HepG2 (cell line): ENCODE measurements at regions of chr14 and their contacts with region 1.

Region 1: GRCh38 chr14:23665375-23666192 is 29.4 kb downstream of the DHRS2 start:
- DNase-seq: peak; percentile 85
- ATAC-seq: peak; percentile 87
- H3K4me3 ChIP-seq: no peak overlapping the region
- H3K27ac ChIP-seq: no peak overlapping the region
- H3K4me1 ChIP-seq: peaks cover 17% of the 10 kb centered on the region
- H3K27me3 ChIP-seq: peaks cover 2 to 11% of the 10 kb centered on the region in 2 experiments; a peak in 3 of 5 replicates
- CTCF ChIP-seq: peak; percentile 92
- EP300 ChIP-seq: no peak
- POLR2A ChIP-seq: no peak
- RAD21 ChIP-seq: peak; percentile 89

Region 2: DNA sequence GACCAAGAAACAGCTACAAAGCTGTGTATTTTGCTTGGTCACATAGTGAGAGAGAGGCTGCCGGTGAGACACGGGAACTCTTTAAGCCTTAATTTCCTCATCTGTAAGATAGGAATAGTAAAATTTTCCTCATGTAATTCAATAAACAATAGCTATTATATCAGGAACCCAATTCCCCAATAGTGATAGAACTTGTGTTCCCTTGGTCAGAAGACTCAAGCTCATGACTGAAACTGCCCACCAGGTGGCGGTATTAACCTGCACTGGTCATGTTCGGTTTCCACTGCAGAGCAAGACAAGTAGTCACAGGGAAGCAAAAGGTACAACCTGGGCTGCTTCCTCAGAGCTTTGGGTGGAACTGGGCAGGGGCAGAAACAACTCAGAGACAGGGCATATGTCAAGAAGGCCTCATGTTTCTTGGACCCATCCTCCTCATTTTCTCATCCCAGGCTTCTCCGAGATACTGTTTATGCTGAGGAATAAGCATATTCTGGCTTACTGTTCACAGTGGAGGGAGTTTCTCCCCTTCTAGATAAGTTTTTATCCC is 679.0 kb before region 1 on chr14:
- CTCF ChIA-PET with region 1: no interaction called
- POLR2A ChIA-PET with region 1: no interaction called
- in situ Hi-C with region 1: no loop called
- intact Hi-C with region 1: no loop called
- DNase-seq: peak; percentile 93
- ATAC-seq: peak; percentile 56
- H3K4me3 ChIP-seq: no peak overlapping the region
- H3K27ac ChIP-seq: no peak overlapping the region
- H3K4me1 ChIP-seq: peaks cover 37% of the 10 kb centered on the region
- H3K27me3 ChIP-seq: no peaks in the 10 kb centered on the region; a peak in 1 of 5 replicates
- CTCF ChIP-seq: no peak
- EP300 ChIP-seq: 0 out of 4 replicates have a peak, but pooled peaks of 1 of the 2 experiments have one; percentile 14
- POLR2A ChIP-seq: no peak
- RAD21 ChIP-seq: peak; percentile 96

Region 3: DNA sequence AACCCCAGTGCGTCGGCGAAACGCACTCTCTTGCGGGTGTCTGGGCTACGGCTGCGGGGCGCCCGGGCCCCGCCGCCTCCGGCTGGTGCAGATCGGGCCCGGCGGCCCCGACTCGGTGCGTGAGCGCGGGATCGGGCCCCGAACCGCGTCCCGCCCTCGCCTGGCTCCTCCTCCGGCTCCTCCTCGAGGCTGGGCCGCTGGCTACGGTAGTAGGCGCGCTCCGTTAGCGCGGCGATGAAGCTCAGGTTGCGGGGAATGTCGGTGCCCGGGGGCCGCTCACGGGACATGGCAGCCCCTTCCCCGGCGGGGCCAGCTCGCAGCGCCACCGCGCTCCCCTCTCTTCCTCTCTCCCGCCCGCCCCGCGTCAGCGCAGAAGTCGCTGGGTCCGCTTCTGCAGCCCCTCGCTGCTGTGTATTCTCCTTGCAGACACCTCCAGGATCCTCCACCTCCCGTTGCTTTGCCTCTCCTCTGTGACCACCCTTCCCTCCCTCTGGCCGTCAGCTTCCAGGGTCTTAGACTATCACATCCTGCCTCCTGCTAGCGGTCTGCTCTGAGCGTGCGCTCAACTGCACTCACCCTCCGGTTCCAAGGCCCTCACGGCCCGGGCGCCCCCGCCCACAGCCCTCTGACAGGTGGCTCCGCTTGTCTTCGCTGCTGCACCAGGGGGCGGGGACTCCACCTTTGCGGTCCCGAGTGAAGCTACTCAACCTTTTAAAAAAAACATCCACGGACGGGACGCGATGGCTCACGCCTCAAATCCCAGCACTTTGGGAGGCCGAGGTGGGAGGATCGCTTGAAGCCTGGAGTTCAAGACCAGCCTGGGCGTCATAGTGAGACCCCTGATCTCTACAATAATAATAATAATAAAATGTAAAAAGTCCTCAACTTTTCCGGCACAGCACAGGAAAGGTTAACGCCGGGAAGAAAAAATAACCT is 363.0 kb before region 1 on chr14 and contains the start of gene PPP1R3E:
- CTCF ChIA-PET with region 1: no interaction called
- POLR2A ChIA-PET with region 1: no interaction called
- in situ Hi-C with region 1: no loop called
- intact Hi-C with region 1: no loop called
- DNase-seq: peak; percentile 84
- ATAC-seq: peak; percentile 57
- H3K4me3 ChIP-seq: peak within 1 kb of the TSS; percentile 61 to 88 (median 67)
- H3K27ac ChIP-seq: peak within 1 kb of the TSS; percentile 91
- H3K4me1 ChIP-seq: peaks cover 60% of the 10 kb centered on the region
- H3K27me3 ChIP-seq: no peaks in the 10 kb centered on the region; a peak in 1 of 5 replicates
- CTCF ChIP-seq: peak; percentile 31
- EP300 ChIP-seq: no peak; a peak in 1 of 4 replicates
- POLR2A ChIP-seq: peak in 1 of 2 experiments; percentile 86; a peak in 2 of 4 replicates
- RAD21 ChIP-seq: 0 out of 2 replicates have a peak, but pooled peaks have one; percentile 3
- total RNA-seq, gene PPP1R3E: 8.3 and 16.5 TPM in 2 replicates

Region 4: GRCh38 chr14:23539248-23540140 is 126.1 kb before region 1 on chr14:
- CTCF ChIA-PET with region 1: no interaction called
- POLR2A ChIA-PET with region 1: no interaction called
- in situ Hi-C with region 1: no loop called
- intact Hi-C with region 1: no loop called
- DNase-seq: peak; percentile 86
- ATAC-seq: peak; percentile 85
- H3K4me3 ChIP-seq: no peak overlapping the region
- H3K27ac ChIP-seq: no peak overlapping the region
- H3K4me1 ChIP-seq: peaks cover 7% of the 10 kb centered on the region
- H3K27me3 ChIP-seq: no peaks in the 10 kb centered on the region
- CTCF ChIP-seq: peak; percentile 96
- EP300 ChIP-seq: no peak
- POLR2A ChIP-seq: no peak
- RAD21 ChIP-seq: peak; percentile 81

Region 5: DNA sequence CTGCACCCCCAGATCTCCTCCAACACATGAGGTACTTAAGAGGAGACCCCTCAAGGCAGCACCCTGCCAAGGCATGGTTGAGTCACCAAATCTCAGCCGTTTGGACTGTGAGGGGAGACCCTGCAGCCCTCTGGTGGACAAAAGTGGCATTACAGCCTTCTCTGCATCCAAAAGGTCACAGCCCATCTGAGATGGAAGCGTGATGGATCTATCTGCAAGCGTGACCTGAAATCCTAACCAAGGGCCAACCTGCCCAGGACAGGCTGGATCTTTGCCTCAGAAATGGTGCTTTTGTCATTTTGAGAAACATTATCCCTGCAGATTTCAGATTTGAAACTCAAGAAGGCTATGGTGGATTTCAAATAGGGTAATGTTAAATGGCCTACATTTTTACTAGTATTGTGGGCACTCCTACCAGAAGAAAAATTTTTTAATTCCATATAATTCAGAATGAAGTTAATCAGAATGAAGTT is 264.3 kb after region 1 on chr14:
- CTCF ChIA-PET with region 1: interaction called, 25 read pairs
- POLR2A ChIA-PET with region 1: no interaction called
- in situ Hi-C with region 1: no loop called
- intact Hi-C with region 1: loop called (anchors 1 kb)
- DNase-seq: peak; percentile 87
- ATAC-seq: peak; percentile 94
- H3K4me3 ChIP-seq: no peak overlapping the region
- H3K27ac ChIP-seq: no peak overlapping the region
- H3K4me1 ChIP-seq: peaks cover 11% of the 10 kb centered on the region
- H3K27me3 ChIP-seq: no peaks in the 10 kb centered on the region
- CTCF ChIP-seq: peak; percentile 93
- EP300 ChIP-seq: no peak
- POLR2A ChIP-seq: no peak
- RAD21 ChIP-seq: peak; percentile 87